Head of caudate nucleus (tissue), 42 donors: ENCODE measurements at regions of chr1 and their contacts with region 1.

Region 1: DNA sequence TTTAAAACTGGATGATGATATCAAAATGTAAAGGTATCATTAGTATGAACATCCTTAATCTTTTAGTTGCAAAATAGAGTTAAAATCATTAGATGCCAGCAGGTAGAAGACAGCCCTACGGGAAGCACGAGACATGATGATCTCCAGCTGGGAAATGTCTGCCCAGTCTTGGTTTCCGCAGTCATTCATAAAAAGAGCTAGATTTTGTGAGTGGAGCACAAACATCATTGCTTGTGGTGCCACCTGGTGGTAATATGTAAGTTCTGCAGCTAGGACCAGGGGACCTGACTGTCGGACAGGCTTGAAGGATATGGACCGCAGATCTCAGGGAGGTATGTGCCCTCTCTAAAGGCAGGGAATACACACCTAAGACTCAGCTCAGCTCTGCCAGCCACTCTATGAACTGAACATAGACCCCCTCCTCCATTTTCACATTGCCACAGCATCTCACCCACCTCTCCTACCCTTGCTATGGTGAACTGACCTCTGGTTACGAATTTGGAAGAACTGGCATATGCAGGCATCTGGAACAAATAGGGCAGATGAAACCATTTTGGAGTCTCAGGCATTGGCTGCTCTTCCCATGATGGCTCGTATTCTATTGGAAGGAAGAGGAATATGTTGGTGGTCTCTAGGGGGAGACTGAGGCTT is 9.2 kb downstream of the FCMR start:
- DNase-seq: peak in 41 of 42 donors; percentile 13 to 89 (median 70)

Region 2: GRCh38 chr1:206635080-206635977 is 277.2 kb before region 1 on chr1 and contains the start of gene DYRK3:
- intact Hi-C with region 1: loop called (anchors 10 kb)
- DNase-seq: peak; percentile 83 to 98 (median 95)

Region 3: GRCh38 chr1:206734499-206735142 is 177.9 kb before region 1 on chr1:
- intact Hi-C with region 1: loop called (anchors 5 kb)
- DNase-seq: peak in 36 of 42 donors; percentile 17 to 78 (median 42)

Region 4: DNA sequence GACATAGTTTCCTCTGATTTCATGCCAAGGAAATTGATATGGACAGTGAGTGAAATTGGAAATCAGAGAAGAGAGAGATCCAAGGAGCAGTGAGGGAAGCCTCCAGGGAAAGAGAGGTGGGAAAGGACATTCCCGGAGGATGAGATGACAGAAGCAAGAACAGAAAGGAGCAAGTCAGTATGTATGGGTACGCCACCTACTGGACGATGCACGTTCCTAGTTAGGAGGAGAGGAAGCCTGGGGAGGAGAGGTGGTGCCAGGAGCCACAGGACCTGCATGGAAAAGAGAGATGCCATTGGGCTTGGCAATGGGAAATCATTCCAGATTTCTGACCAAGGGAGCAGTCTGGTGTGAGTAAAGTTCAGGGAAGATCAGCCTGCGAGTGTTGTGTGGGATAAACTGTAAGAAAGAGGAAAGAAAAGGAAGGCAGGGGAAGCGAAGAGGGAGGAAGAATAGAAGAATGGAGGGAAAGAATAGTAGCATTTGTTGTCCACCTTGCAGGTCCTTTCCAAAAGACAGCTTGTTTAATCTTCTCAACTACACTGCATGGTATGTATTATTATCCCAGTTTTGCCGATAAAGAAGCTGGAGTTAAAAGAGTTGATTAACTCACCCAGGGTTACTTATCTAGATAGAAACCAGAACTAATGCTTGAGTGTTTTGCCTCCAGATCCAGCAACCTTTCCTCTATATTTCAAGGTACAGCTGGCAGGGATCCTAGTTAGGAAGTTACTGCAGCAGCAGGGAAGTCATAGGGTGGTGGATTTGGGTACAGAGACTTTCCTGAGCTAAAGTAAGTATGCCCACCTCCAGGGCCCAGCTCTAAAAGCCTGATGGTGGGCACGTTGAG is 92.6 kb after region 1 on chr1:
- intact Hi-C with region 1: no loop called
- DNase-seq: peak in 35 of 42 donors; percentile 17 to 79 (median 48)